ENCODE measurements at regions of chr1 and their contacts with region 1.

Region 1: GRCh38 chr1:207963427-207964194 is 52.7 kb upstream of the CD34 start:
- DNase-seq: peak; percentile 97
- CTCF ChIP-seq: peak; percentile 98

Region 2: DNA sequence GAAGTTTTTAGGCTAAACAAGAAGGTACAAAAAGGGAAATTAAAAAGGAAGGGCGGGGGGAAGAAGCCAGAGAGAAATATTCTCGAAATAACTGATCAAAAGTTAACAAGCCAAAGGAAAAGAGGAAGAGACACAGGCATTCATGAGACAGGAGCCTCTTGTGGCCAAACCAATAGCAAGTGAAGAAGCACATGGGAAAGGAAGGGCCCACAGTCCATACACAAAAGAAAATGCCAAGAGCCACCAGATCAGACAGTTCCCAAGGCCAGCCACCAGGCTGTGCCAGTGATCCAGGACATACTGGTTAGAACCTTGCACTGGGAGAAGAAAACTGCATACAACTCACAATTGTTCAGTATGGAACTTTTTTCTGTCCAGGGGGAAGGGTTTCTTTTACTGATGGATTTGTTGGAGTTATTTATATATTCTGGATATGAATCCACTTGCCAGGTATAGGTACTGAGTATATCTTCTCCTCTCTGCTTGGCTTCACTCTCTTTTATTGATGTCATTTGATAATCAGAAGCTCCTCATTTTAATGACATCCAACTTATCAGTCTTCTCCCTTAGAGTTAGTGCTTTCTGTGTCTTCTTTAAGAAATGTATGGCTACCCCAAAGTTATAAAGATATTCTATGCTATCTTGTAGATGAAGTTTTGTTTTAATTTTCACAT is 135.0 kb before region 1 on chr1:
- CTCF ChIA-PET with region 1: interaction called, 59 read pairs
- POLR2A ChIA-PET with region 1: interaction called, 3 read pairs
- DNase-seq: peak; percentile 47
- CTCF ChIP-seq: peak; percentile 81

Region 3: DNA sequence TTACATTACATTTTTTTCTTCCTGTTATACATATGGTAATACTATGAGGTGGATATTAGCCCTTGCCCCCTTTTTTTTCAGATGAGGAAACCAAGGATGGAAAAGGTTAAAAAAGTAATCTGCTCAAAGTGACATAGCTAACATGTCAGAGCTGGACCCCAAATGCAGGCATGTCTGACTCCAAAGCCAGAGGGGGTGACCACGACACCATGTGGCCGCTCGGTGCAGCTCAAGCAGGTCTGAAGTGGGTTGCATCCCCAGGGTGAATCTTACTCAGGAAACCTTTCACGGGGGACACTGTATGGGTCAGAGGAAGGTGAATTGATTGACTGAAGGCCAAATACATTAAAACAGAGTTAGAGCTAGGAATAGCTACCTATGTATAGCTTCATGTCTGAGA is 87.5 kb before region 1 on chr1:
- CTCF ChIA-PET with region 1: interaction called, 222 read pairs
- POLR2A ChIA-PET with region 1: no interaction called
- DNase-seq: no peak
- CTCF ChIP-seq: peak; percentile 38

Region 4: DNA sequence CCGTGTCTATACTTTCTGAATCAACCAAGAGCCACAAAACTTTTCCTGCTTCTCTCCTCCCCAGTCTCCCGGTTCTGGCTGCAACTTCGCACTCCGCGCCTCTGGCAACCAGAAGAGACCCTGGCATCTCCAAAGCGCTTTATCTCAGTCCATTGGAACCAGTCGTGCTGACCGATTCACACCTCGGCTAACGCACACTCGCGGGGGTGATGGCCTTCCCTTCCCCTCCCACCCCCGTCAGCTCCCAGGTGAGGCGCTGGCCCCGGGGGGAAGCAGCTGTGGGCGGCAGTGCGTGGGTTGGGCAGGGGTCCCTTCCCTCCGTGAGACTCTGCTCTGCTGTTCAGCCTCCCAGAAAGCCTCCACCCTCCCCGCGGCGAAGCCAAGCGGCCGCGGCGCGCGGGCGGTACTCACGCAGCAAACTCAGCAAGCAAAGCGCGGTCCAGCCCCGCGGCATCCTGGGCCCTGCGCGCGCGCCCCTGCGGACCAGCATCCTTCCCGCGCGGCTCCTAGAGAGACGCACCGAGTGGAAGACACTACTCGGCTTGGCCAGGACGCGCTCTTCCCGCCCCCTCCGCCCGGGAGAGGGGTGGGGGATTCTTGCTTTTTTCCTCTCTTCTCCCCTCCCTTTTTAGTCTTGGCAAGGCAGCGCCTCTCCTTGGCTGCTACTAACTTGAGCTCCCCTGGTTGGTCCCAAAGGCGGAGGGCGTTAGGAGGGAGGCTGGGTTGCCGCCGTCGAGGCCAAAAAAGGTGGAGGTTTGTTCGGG is 52.8 kb before region 1 on chr1 and contains the start of gene CD34:
- CTCF ChIA-PET with region 1: interaction called, 32 read pairs
- POLR2A ChIA-PET with region 1: no interaction called
- DNase-seq: no peak
- CTCF ChIP-seq: no peak

Region 5: DNA sequence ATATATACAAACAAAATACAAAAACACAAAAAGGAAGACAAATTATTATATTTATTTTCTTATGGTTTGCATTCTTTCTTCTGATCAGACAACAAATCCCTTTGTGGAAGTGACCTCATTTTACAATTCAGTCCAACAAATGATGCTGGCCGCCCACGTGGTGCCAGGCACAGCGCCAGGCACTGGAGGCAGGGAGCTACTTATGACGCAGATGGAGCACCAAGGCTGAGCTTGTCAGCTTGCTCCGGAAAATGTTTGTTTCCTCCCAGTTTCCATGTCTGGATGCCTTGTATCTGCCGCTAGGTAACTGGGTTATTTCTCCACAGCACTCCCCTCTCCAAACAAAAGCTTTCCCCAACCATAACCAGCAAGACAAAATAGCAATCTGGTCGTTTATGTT is 21.9 kb before region 1 on chr1:
- CTCF ChIA-PET with region 1: interaction called, 56 read pairs
- POLR2A ChIA-PET with region 1: no interaction called
- DNase-seq: no peak
- CTCF ChIP-seq: no peak

Region 6: DNA sequence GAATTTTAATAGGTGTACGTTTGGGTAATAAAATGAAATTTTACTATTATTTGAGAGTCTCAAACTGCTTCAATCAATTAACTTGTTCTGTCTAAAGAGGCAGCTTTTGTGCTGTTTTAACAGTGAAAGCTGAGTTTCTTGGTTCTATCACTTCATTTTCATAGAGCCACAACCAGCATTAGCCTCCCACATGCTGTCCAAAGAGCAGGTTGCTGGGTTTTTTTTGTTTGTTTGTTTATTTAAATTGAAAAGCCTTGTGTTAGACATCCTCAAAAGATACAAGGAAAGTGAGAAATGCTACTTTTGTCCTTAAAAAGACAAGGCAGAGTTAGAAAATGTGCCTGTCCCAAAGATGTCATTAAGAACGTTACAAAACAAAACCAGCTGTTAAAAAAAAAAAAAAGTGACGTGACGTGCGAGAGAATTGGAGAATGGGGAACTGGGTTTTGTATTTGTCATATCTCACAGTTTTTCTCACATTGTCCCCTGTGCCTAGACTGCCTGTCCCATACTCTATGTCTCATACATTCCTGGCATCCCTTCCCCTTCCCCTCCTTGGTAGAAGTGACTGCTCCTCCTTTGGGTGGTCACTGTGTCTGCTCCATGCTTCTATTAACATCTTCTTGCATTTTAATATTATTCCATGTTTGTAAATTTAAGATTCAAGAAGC is 10.4 kb after region 1 on chr1:
- CTCF ChIA-PET with region 1: interaction called, 11 read pairs
- POLR2A ChIA-PET with region 1: no interaction called
- DNase-seq: peak; percentile 27
- CTCF ChIP-seq: no peak

Measured in GM10248 (cell line).